Thyroid gland (tissue), 4 donors: ENCODE measurements at regions of chr9 and their contacts with region 1.

Region 1: DNA sequence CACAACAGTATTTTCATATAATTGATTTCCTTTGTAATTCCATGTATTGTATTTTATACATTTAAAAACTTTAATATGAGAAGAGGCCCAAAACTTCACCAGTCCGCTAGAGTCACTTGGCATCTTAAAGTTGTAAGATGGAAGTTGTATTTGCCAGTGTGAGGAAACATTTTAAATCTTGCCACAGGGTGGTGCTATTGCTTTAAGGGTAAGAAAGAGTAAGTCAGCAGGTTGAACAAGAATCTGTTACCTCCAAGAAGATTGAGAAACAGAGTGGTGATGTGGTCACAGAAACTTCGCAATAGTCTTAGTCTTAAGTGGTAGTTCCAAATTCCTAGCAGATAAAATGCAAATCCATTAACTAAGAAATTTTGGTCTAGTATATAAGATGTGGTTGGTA is 39.8 kb upstream of the RANBP6 start:
- DNase-seq: peak; percentile 34 to 50
- H3K4me3 ChIP-seq: no peak overlapping the region
- H3K27ac ChIP-seq: no peak overlapping the region
- H3K4me1 ChIP-seq: peaks cover 0 to 3% of the 10 kb centered on the region in 2 donors
- H3K27me3 ChIP-seq: no peaks in the 10 kb centered on the region
- CTCF ChIP-seq: peak in 5 of 6 experiments; percentile 29 to 85 (median 58)
- POLR2A ChIP-seq: no peak

Region 2: DNA sequence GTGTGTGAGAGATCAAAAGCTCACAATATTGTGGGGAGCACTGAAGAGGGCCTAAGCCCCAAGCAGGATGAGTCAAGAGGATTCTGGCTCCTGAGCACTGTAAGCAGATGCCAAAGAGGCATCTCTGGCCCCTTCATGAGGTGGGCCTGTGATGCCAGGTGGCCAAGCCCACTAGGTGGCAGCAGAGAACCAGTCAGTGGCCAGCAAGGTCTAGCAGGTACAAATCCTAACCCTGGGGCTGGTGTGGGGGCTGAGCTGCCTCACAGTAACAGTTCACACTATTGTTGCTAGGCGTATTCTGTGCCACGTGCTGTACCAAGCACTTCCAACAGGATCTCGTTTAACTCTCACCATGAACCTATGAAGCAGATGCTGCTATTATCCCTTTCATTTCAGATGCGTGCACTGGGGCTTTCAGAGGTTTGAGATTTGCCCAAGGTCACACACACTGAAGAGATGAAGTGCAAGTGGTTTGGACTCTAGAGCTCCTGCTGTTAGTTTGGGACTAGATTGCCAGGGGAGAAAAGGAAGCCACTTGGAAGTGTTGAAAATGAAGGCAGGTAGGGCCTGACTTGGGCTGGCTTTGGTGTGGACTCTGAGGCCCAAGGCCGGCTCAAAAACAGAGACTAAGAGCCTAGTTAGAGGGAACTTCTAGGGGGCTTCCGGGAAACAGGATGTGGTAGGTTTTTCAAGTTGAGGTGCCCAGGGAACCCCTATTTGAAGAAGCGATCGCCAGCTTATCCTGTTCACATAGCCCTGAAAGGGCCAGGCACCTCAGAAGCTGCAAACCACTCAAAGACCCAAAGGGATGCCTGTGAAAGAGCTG is 168.9 kb before region 1 on chr9:
- intact Hi-C with region 1: loop called (anchors 2 kb)
- DNase-seq: peak; percentile 85 to 89
- H3K4me3 ChIP-seq: no peak overlapping the region
- H3K27ac ChIP-seq: no peak overlapping the region
- H3K4me1 ChIP-seq: peaks cover 14 to 25% of the 10 kb centered on the region in 2 donors
- H3K27me3 ChIP-seq: no peaks in the 10 kb centered on the region
- CTCF ChIP-seq: peak; percentile 84 to 94 (median 90)
- POLR2A ChIP-seq: no peak